ENCODE measurements at regions of chr14 and their contacts with region 1.

Region 1: GRCh38 chr14:37874429-37875191 is 279.2 kb downstream of the TTC6 start:
- DNase-seq: peak; percentile 40 to 93 (median 76)

Region 2: GRCh38 chr14:37230551-37231194 is 643.9 kb before region 1 on chr14:
- intact Hi-C with region 1: loop called (anchors 5 kb)
- DNase-seq: no peak

Region 3: DNA sequence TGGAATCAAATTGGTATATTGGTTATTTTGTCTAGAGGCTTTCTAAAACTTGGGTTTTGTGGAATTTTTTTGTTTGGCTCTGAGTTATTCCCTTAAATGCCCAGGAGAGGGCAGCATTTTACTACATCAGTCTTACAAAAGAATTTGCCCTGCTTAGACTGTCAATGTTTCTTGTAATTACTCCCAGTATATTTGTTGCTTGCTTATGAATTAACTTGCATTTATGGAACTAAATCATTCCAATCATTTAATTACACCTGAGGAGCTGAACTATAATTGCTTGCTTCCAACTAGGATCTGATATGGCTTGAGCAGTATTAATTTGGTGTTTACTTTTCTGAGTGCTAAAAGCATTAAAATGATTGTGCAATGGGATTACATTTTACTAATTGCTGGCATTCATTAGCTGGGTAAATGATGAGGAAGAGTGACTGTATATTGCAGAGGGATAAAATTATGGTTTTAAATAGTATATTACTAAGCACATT is 628.1 kb before region 1 on chr14:
- intact Hi-C with region 1: loop called (anchors 2 kb)
- DNase-seq: no peak

Region 4: GRCh38 chr14:37709419-37710195 is 165.0 kb before region 1 on chr14:
- intact Hi-C with region 1: loop called (anchors 5 kb)
- DNase-seq: no peak